ENCODE measurements at regions of chr11 and their contacts with region 1.

Region 1: DNA sequence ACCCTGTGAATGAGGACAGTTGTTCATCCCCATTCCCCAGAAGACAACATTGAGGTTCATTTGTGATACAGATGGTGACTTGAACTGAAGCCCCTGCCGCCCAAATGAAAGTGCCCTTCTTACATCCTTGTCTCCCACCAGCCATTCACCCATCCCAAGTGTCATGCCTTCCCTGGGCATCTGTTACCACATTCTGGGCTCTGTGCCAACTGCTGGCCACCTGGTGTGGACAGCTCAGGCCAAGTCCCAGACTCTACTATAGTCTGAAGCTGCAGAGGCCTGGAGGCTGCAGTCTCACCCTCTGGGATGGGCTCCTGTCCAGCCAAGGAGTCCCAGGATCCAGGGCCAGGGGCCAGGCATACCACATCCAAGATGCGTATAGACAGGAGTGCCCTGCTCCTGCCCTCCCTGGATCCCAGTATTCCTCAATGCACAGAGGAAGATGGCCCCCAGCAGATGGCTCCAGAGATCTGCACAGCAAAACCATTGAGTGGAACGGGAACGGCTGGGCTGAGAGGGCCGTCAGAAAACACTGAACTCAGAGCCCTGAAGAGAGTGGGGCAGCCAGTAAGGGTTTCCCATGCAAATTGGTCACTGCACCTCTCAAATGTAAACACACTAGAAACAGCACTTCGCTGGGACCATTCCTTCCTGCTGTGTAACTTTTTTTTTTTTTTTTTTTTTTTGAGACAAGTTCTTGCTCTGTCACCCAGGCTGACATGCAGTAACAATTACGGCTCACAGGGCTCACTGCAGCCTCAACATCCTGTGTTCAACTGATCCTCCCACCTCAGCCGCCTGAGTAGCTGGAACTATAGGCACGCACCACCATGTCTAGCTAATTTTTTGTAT is 22.8 kb downstream of the ARRB1 start:
- DNase-seq: peak; percentile 20 to 80 (median 58)
- ATAC-seq: peak; percentile 96
- H3K4me3 ChIP-seq: no peak overlapping the region
- H3K4me3 Mint-ChIP-seq: peak overlapping the region; percentile 80
- H3K27ac ChIP-seq: peak overlapping the region; percentile 44 to 64
- H3K27ac Mint-ChIP-seq: peak overlapping the region; percentile 96
- H3K4me1 ChIP-seq: peaks cover 62% of the 10 kb centered on the region
- H3K4me1 Mint-ChIP-seq: peaks cover 80% of the 10 kb centered on the region
- H3K27me3 ChIP-seq: no peaks in the 10 kb centered on the region
- H3K27me3 Mint-ChIP-seq: no peaks in the 10 kb centered on the region
- CTCF ChIP-seq: peak; percentile 57

Region 2: GRCh38 chr11:75280227-75280701 is 48.4 kb before region 1 on chr11:
- CTCF ChIA-PET with region 1: interaction called, 4 read pairs
- POLR2A ChIA-PET with region 1: interaction called, 19 read pairs
- intact Hi-C with region 1: loop called (anchors 2 kb)
- DNase-seq: peak; percentile 62 to 87 (median 74)
- ATAC-seq: peak; percentile 51
- H3K4me3 ChIP-seq: no peak overlapping the region
- H3K4me3 Mint-ChIP-seq: peak overlapping the region; percentile 62
- H3K27ac ChIP-seq: no peak overlapping the region
- H3K27ac Mint-ChIP-seq: peak overlapping the region; percentile 87
- H3K4me1 ChIP-seq: peaks cover 50% of the 10 kb centered on the region
- H3K4me1 Mint-ChIP-seq: peaks cover 51% of the 10 kb centered on the region
- H3K27me3 ChIP-seq: no peaks in the 10 kb centered on the region
- H3K27me3 Mint-ChIP-seq: no peaks in the 10 kb centered on the region
- CTCF ChIP-seq: peak; percentile 95

Region 3: DNA sequence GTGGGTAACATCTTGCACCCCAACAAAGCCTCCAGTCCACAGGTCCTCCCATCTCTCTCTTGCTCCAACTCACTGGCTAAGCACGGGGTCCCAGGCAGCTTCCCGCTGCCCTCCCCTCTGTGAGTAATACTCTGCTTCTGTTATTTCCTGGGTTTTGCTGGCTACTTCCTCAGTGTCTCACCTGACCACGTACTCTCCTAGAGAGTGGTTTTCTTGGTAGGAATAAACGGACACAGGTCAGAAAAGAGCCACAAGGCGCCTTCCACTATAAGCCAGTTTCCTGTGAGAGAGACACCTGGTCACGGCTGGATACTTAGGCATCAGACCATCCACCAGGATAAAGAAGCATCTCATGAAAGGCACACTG is 13.2 kb before region 1 on chr11:
- CTCF ChIA-PET with region 1: no interaction called
- POLR2A ChIA-PET with region 1: no interaction called
- intact Hi-C with region 1: no loop called
- DNase-seq: no peak
- ATAC-seq: no peak
- H3K4me3 ChIP-seq: no peak overlapping the region
- H3K4me3 Mint-ChIP-seq: no peak overlapping the region
- H3K27ac ChIP-seq: no peak overlapping the region
- H3K27ac Mint-ChIP-seq: no peak overlapping the region
- H3K4me1 ChIP-seq: peaks cover 10% of the 10 kb centered on the region
- H3K4me1 Mint-ChIP-seq: peaks cover 25% of the 10 kb centered on the region
- H3K27me3 ChIP-seq: no peaks in the 10 kb centered on the region
- H3K27me3 Mint-ChIP-seq: no peaks in the 10 kb centered on the region
- CTCF ChIP-seq: no peak

Region 4: GRCh38 chr11:75342903-75343870 is 14.5 kb after region 1 on chr11:
- CTCF ChIA-PET with region 1: interaction called, 6 read pairs
- POLR2A ChIA-PET with region 1: interaction called, 33 read pairs
- intact Hi-C with region 1: loop called in 1 of 2 experiments (anchors 2 kb)
- DNase-seq: no peak
- ATAC-seq: no peak
- H3K4me3 ChIP-seq: no peak overlapping the region
- H3K4me3 Mint-ChIP-seq: no peak overlapping the region
- H3K27ac ChIP-seq: peak overlapping the region in 1 of 2 donors; percentile 34
- H3K27ac Mint-ChIP-seq: peak overlapping the region; percentile 88
- H3K4me1 ChIP-seq: peaks cover 99% of the 10 kb centered on the region
- H3K4me1 Mint-ChIP-seq: peaks cover 95% of the 10 kb centered on the region
- H3K27me3 ChIP-seq: no peaks in the 10 kb centered on the region
- H3K27me3 Mint-ChIP-seq: no peaks in the 10 kb centered on the region
- CTCF ChIP-seq: no peak

Region 5: GRCh38 chr11:75351791-75352587 is 23.3 kb after region 1 on chr11:
- CTCF ChIA-PET with region 1: interaction called, 4 read pairs
- POLR2A ChIA-PET with region 1: interaction called, 17 read pairs
- intact Hi-C with region 1: loop called (anchors 2 kb)
- DNase-seq: peak; percentile 37 to 90 (median 58)
- ATAC-seq: peak; percentile 64
- H3K4me3 ChIP-seq: peak overlapping the region; percentile 74
- H3K4me3 Mint-ChIP-seq: peak overlapping the region; percentile 98
- H3K27ac ChIP-seq: peak overlapping the region; percentile 59 to 68
- H3K27ac Mint-ChIP-seq: peak overlapping the region; percentile 91
- H3K4me1 ChIP-seq: peaks cover 59% of the 10 kb centered on the region
- H3K4me1 Mint-ChIP-seq: peaks cover 68% of the 10 kb centered on the region
- H3K27me3 ChIP-seq: no peaks in the 10 kb centered on the region
- H3K27me3 Mint-ChIP-seq: no peaks in the 10 kb centered on the region
- CTCF ChIP-seq: no peak

Region 6: DNA sequence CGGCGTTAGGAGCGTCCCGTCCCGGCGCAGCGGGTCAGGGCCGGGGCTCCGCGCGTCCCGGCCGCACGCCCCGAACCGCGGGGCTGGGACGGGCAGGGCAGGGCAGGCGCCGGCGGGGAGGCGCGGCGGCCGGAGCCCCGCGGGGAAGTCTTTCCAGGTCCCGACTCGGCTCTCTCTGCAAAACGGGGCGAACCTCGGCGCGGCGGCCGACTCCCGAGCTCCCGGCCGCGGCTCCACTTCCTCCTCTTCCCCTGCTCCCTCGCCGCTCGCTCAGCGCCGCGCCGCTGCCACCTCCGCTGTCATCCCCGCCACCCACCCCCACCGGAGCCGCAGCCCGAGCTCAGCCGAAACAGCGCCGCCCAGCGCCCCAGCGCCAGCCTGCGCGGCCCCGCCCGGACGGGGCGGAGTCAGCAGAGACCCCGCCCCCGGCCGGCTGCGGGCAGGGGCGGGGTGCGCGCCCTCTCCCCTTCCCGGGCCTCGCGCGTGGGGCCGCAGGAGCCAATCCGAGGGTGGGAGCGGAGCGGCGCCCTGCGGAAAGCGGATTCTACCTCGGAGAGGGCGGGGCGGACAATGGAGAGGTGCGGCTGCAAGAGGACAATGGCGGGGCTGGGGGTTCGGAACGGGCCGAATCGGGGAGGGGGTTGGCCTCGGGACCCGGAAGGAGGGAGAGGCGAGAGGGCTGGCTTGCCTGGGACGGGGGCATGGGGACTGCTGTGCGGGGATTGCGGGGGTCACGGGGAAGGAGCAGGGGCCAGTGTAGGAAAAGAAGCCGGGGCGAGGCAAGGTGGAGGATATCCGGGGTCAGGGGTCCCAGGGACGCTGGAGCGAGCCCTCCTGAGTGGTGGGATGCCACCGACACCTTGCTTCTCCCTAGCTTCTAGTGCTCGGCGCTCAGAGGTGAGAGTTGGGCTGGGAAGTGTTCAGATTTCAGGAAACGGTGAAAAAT is 197.2 kb after region 1 on chr11 and contains the start of gene GDPD5:
- CTCF ChIA-PET with region 1: no interaction called
- POLR2A ChIA-PET with region 1: no interaction called
- intact Hi-C with region 1: loop called in 1 of 2 experiments (anchors 5 kb)
- DNase-seq: peak; percentile 73 to 95 (median 84)
- ATAC-seq: peak; percentile 92
- H3K4me3 ChIP-seq: peak within 1 kb of the TSS; percentile 78
- H3K4me3 Mint-ChIP-seq: peak within 1 kb of the TSS; percentile 94
- H3K27ac ChIP-seq: no peak within 1 kb of the TSS
- H3K27ac Mint-ChIP-seq: peak within 1 kb of the TSS; percentile 80
- H3K4me1 ChIP-seq: peaks cover 45% of the 10 kb centered on the region
- H3K4me1 Mint-ChIP-seq: peaks cover 57% of the 10 kb centered on the region
- H3K27me3 ChIP-seq: no peaks in the 10 kb centered on the region
- H3K27me3 Mint-ChIP-seq: no peaks in the 10 kb centered on the region
- CTCF ChIP-seq: no peak
- total RNA-seq, gene GDPD5: 91.6 to 101 TPM